ENCODE measurements at regions of chr12 and their contacts with region 1.

Region 1: DNA sequence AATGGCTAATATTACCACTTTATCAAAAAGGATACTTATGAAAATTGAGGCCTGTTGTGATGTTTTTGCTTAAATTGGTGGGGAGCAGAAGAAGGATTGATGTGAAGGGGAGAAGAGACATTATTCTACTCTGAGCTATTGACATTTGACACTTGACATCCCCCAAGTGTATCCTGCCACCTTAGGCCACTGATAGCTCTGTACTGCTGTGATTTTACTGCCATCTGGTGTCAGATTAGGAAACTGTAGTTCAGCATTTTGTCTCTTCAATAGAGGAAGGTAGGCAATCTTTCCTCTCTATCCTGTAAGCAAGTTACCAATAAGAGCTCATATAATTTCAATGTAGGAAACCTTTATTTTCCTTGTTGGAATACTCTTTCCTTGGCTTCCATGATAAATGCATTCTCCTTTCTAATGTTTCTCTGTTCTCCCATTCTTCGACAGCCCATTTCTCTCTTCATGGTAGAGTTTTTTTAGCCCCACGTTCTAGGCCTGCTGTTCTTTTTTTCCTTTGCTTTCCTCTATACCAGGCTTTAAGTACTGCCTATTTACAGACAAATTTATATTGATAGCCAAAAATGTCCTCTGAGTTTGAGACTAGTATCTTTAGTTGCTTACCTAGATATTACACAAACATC is 46.3 kb downstream of the PPHLN1 start:
- DNase-seq: peak in 1 of 2 donors; percentile 21
- ATAC-seq: peak in 5 of 8 donors; percentile 51 to 77 (median 68)
- H3K4me3 ChIP-seq: no peak overlapping the region
- H3K27ac ChIP-seq: no peak overlapping the region
- H3K4me1 ChIP-seq: no peaks in the 10 kb centered on the region
- H3K27me3 ChIP-seq: no peaks in the 10 kb centered on the region
- CTCF ChIP-seq: peak; percentile 41 to 86 (median 73)

Region 2: DNA sequence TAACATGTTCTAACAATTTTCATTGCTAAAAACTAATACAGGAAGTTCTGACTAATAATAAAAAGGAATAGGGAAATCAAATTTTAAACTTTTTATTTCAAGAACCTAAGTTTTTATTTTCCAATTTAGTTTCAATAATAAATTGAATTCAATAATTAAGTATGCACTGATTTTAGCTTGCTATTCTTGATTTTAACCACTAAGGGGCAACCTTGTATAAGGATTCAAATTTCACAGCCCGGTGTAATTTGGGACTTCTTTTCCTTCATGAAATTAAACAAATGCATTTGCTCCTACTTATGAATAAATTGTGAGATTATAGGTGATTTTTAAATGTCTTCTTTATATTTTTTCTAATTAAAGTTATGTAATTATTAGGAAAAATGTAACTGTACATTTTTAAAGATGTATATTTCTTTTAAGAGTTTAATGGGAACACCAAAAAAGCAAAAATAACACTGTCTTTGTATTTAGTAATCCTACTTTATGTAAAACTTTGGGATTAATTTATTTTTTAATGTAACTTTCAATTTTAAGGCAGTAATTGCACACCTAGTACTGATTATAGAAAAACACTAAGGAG is 1425.6 kb before region 1 on chr12:
- intact Hi-C with region 1: loop called in 1 of 10 experiments (anchors 10 kb)
- DNase-seq: no peak
- ATAC-seq: no peak
- H3K4me3 ChIP-seq: no peak overlapping the region
- H3K27ac ChIP-seq: no peak overlapping the region
- H3K4me1 ChIP-seq: no peaks in the 10 kb centered on the region
- H3K27me3 ChIP-seq: no peaks in the 10 kb centered on the region
- CTCF ChIP-seq: peak; percentile 29 to 74 (median 65)

Region 3: GRCh38 chr12:41684997-41685396 is 687.3 kb before region 1 on chr12:
- intact Hi-C with region 1: loop called in 1 of 10 experiments (anchors 10 kb)
- DNase-seq: no peak
- ATAC-seq: no peak
- H3K4me3 ChIP-seq: no peak overlapping the region
- H3K27ac ChIP-seq: no peak overlapping the region
- H3K4me1 ChIP-seq: no peaks in the 10 kb centered on the region
- H3K27me3 ChIP-seq: no peaks in the 10 kb centered on the region
- CTCF ChIP-seq: peak in 2 of 9 donors; percentile 43 to 59

Region 4: DNA sequence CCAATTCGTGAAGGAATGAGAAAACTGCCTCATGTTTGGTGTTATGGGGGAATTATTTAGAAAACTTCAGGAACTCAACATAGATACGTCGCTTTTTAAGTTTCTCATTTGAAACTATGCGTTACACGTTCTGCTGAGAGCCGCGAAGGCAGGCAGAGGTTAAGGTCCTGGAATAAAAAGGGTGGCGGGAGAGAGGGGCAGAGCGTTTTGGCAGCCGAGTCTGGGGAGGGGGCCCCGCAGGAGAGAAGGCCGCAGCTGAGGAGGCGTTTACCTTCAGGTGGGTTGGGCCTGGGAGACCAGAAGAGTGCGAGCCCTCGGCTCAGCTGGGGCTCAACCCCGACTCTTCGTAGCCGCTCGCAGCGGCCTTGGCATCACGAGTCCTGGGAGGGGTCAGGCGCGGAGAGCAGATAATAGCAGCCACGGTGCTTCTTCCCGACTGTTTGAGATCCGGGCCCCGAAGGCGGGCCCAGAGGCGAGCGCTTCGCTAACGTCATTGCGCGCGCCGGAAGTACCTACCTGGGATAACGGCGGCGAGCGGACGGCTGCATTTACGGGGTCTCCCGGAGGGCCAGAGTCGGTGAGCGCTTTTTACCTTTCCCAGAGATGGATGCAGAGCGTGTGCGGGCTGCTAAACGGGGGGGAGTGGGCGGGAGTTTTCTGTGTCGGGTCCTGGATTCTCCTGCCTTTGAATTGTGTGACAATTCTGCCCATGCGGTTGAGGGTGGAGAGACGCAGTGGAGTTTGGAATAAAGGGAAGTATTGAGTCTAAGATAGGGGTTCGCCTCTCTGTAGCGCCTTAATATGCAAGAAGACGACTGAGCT is 46.4 kb before region 1 on chr12 and contains the starts of genes PPHLN1 and ZCRB1:
- intact Hi-C with region 1: loop called in 1 of 10 experiments (anchors 5 kb)
- DNase-seq: peak; percentile 79 to 81
- ATAC-seq: peak; percentile 96 to 99 (median 98)
- H3K4me3 ChIP-seq: peak within 1 kb of the TSS; percentile 60 to 94 (median 74)
- H3K27ac ChIP-seq: peak within 1 kb of the TSS; percentile 23 to 93 (median 80)
- H3K4me1 ChIP-seq: peaks cover 3 to 38% (median 22%) of the 10 kb centered on the region in 9 donors
- H3K27me3 ChIP-seq: no peaks in the 10 kb centered on the region
- CTCF ChIP-seq: no peak
- total RNA-seq, gene PPHLN1: 28.2 to 41.8 (median 34.8) TPM
- total RNA-seq, gene ZCRB1: 51.0 to 69.6 (median 58.6) TPM

Measured in heart right ventricle (tissue), 16 donors.